CD4-positive, alpha-beta memory T cell (primary cell): ENCODE measurements at regions of chr20 and their contacts with region 1.

Region 1: DNA sequence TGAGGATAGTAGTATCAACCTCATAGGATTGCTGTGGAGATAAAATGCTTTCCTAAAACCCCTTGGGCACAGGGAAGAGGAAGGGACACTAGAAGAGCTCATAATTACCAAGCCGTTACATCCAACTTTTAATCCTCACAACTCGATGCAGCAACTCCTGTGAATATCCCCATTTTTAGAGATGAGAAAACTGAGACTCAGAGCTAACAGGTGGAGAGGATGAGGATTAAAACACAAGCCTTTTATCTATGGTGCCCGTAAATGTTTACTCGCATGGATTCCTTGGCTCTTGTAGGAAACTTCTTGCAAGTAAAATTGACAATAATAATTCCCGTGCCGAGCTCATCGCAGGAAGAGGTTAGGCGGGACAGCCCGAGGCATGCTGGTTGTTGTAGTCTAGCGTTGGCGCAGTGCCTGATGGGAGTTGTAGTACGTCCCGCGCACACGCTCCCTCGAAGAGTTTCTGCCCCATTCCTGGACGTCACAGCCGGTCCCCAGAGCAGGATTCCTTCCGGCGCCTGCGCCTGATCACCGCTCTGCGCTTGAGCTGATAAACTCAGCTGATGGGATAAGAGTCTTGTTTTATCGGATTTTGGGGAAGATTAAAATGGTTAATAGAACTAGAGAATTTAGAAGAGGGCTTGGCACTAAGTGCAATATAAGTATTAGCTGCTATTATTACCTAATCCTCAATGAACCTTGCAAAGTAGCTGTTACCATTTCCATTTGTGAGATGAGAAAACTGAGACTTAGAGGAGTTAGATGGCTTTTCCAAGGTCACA is 2.8 kb upstream of the UBE2V1 start:
- DNase-seq: peak; percentile 88 to 93 (median 89)
- H3K4me3 ChIP-seq: peak overlapping the region; percentile 39 to 52
- H3K4me3 Mint-ChIP-seq: peak overlapping the region; percentile 81 to 95 (median 90)
- H3K27ac ChIP-seq: peak overlapping the region; percentile 59
- H3K27ac Mint-ChIP-seq: peak overlapping the region; percentile 74 to 97 (median 97)
- H3K4me1 ChIP-seq: peaks cover 46% of the 10 kb centered on the region
- H3K4me1 Mint-ChIP-seq: peaks cover 42 to 58% (median 50%) of the 10 kb centered on the region in 4 donors
- H3K27me3 ChIP-seq: no peaks in the 10 kb centered on the region
- H3K27me3 Mint-ChIP-seq: no peaks in the 10 kb centered on the region

Region 2: DNA sequence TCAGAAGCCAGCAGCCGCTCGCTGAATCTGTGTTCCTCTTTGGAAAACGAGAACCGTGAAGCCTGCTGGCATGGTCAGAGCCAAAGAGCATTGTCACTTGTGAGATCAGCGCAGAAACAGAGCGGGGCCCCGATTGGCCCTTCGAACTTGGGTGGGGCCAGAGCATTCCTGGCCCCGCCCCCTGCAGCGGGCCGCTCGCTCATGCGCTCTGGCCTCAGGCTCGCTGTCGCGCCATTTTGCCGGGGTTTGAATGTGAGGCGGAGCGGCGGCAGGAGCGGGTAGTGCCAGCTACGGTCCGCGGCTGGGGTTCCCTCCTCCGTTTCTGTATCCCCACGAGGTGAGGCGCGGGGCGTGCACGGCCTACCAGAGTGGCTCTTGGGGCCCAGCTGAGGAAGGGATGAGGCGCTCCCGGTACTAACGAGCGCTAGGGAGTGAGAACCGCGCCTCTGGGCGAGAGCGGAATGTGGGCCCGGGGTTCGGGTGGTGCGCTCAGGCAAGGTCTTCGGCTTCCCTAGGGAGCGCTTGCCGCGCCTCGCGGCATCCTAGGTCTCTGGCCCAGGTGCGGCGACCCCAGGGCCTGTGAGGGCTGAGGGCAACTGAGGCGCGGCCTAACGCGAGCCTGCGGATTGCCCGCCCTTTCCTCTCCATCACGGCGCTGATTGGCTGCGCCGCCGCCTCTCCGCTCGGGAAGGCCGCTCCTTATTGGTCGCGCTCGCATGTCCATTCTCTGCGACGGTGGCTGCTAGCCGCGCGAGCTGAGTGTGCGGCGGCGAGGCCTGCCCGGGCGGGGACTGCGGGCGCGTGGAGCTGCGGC is 1069.5 kb before region 1 on chr20 and contains the start of gene CSE1L:
- CTCF ChIA-PET with region 1: no interaction called
- POLR2A ChIA-PET with region 1: no interaction called
- intact Hi-C with region 1: loop called (anchors 10 kb)
- DNase-seq: peak; percentile 93 to 97 (median 94)
- H3K4me3 ChIP-seq: peak within 1 kb of the TSS; percentile 99 to 100
- H3K4me3 Mint-ChIP-seq: peak within 1 kb of the TSS; percentile 97 to 99 (median 98)
- H3K27ac ChIP-seq: peak within 1 kb of the TSS; percentile 87
- H3K27ac Mint-ChIP-seq: peak within 1 kb of the TSS; percentile 98 to 99 (median 99)
- H3K4me1 ChIP-seq: peaks cover 40% of the 10 kb centered on the region
- H3K4me1 Mint-ChIP-seq: peaks cover 24 to 49% (median 38%) of the 10 kb centered on the region in 4 donors
- H3K27me3 ChIP-seq: no peaks in the 10 kb centered on the region
- H3K27me3 Mint-ChIP-seq: no peaks in the 10 kb centered on the region
- total RNA-seq, gene CSE1L: 44.5 to 45.8 TPM

Region 3: DNA sequence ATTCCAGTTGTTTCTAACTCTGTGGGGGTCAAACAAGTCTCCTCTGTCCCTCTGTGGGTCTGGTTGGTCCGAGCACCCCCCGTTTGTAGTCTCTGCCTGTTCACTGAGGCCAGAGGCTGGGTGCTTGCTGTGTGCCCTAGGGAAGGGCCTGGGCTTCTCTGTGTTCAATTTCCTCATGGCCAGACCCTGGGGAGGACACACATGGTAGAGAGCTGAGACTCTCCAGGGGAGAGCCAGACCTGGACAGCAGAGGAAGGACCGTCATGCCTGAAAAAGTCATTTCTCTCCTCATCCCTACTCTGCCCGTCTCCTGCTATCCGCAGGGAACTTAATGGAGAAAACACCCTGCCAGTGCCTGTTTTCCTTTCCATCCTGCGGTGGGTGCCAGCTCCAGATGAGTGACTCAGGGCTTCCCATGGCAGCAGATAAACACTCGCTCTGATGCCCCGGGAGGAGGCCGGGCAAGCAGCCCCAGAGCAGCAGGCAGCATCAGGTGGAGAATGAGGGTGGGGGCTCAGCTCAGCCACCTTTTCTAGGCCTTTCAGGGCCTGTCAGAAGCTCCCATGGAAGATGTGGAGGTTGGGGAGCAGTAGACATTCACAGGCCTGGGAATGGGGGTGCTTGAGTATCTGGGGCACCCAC is 81.1 kb before region 1 on chr20:
- CTCF ChIA-PET with region 1: no interaction called
- POLR2A ChIA-PET with region 1: no interaction called
- intact Hi-C with region 1: no loop called
- DNase-seq: no peak
- H3K4me3 ChIP-seq: no peak overlapping the region
- H3K4me3 Mint-ChIP-seq: no peak overlapping the region
- H3K27ac ChIP-seq: no peak overlapping the region
- H3K27ac Mint-ChIP-seq: no peak overlapping the region
- H3K4me1 ChIP-seq: no peaks in the 10 kb centered on the region
- H3K4me1 Mint-ChIP-seq: no peaks in the 10 kb centered on the region
- H3K27me3 ChIP-seq: no peaks in the 10 kb centered on the region
- H3K27me3 Mint-ChIP-seq: peaks cover 0 to 3% of the 10 kb centered on the region in 2 donors

Region 4: DNA sequence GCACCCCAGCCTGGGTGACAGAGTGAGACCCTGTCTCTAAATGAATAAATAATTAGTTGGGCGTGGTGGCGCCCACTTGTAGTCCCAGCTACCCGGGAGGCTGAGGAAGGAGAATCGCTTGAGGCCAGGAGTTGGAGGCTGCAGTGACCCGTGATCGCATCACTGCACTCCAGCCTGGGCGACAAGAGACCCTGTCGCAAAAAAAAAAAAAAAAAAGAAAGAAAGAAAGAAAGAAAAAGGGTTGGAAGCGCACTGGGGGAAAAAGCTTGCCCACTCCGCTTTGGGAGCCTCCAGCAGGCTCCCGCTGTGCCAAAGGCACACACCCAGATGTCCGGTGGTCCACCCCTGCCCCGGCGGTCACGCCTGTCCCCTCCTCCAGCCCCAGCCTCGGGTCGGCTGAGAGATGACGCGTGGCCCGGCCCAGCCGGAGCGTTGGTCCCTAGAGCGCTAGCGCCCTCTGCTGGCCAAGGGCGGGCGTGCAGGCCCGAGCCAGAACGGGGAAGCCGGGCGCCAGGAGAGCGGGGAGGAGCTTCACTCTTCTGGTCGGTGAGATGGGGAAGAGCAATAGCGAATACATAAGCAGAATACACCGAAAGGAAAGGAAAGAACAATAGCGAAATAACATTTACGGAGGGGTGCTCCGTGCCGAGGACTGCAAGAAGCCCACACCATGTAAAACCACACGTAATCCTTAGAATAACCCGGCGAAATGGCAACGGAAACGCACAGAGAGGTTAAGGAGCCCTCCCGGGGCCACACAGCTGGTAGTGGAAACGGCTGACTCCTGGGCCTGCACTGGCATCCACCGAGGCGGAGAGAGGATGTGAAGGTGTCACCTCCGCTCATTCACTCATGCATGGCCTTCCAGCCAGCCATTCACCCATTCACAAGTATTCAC is 44.5 kb before region 1 on chr20:
- CTCF ChIA-PET with region 1: interaction called, 17 read pairs
- POLR2A ChIA-PET with region 1: no interaction called
- intact Hi-C with region 1: no loop called
- DNase-seq: peak; percentile 79 to 90 (median 83)
- H3K4me3 ChIP-seq: peak overlapping the region; percentile 0 to 34
- H3K4me3 Mint-ChIP-seq: peak overlapping the region; percentile 71 to 79 (median 74)
- H3K27ac ChIP-seq: no peak overlapping the region
- H3K27ac Mint-ChIP-seq: peak overlapping the region in 3 of 7 donors; percentile 40 to 84 (median 81)
- H3K4me1 ChIP-seq: peaks cover 6% of the 10 kb centered on the region
- H3K4me1 Mint-ChIP-seq: peaks cover 3 to 6% (median 5%) of the 10 kb centered on the region in 4 donors
- H3K27me3 ChIP-seq: no peaks in the 10 kb centered on the region
- H3K27me3 Mint-ChIP-seq: peaks cover 0 to 2% of the 10 kb centered on the region in 2 donors

Region 5: DNA sequence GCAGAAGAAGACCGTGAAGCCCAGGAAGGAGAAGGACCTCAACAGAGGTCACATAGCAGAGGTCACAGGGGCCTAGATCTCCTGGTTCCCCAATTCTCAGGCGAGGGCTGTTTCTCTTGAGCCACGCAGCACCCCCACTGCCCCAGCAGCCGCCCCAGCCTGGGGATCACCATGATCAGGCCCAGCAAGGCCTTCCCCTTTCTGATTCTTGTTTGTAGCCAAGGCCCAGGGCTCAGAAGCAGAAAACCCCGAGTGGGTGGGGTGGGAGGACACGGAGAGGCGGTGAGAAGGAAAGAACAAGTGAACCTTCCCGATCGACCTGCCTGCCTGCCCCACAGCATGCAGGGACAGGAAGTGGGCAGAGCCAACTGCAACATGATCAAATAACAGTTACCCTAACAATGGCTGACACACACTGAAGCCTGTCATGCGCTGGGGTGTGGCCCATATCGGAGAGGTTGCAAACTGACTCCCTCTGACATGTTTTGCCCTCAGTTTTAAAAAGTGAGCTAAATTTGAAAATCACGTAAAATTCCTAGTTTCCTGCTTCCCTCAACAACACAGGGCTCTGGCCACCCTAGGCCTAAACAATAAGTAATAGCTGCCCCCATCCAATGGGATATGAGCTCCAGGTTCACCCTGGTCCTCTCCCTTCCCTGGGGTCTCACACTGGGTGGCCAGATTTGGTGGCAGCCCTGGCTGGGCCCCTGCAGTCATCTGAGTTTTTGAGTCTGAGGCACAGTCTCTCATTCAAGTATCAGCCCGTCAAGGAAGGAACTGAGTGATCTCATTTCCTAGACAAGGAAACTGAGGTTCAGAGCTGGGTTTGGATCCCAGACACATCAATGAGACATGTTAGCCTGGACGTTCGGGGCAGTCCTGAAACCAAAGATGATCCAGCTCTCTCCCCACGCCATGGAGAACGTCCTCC is 31.2 kb after region 1 on chr20:
- CTCF ChIA-PET with region 1: interaction called, 70 read pairs
- POLR2A ChIA-PET with region 1: interaction called, 76 read pairs
- intact Hi-C with region 1: loop called (anchors 1 kb)
- DNase-seq: peak; percentile 78 to 94 (median 84)
- H3K4me3 ChIP-seq: peak overlapping the region; percentile 4 to 49
- H3K4me3 Mint-ChIP-seq: peak overlapping the region; percentile 78 to 93 (median 84)
- H3K27ac ChIP-seq: peak overlapping the region; percentile 78
- H3K27ac Mint-ChIP-seq: peak overlapping the region; percentile 97 to 99 (median 98)
- H3K4me1 ChIP-seq: peaks cover 65% of the 10 kb centered on the region
- H3K4me1 Mint-ChIP-seq: peaks cover 48 to 70% (median 60%) of the 10 kb centered on the region in 4 donors
- H3K27me3 ChIP-seq: no peaks in the 10 kb centered on the region
- H3K27me3 Mint-ChIP-seq: no peaks in the 10 kb centered on the region

Region 6: DNA sequence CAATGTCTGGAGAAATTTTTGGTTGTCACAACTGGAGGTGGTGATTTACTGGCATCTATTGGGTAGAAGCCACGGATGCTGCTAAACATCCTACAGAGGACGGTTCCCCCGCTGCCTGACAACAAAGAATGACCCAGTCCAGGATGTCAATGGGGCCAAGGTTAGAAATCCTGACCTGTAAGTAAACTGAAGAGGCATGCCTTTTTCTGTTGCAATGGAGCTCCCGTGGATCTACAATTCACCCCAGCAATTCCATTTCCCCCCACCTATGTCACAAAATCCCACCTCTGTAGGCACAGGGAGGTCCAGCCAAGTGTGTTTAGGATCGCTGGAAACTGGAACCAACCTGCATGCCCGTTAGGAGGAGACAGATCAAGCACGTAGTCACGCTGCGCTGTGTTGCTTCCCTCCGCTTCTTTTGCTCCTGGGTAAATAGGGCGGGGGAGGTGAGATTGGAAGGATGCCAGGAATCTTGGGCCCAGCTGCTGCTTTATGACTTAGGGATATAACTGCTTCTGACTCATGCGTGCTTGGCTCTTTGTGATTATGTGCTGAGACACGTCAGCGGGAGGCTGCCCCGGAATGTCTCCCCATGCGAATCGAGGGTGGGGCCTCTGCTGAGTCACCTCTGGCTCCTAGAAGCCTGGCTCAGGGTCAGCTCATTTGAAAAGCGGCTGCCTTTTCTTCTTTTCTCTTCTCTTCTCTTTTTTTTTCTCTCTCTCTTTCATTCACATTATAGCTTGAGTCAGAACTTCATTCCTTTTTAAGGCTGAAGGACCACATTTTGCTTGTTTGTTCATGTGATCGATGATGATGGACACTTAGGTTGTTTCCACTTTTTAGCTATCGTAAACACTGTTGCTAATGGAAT is 50.1 kb after region 1 on chr20:
- CTCF ChIA-PET with region 1: interaction called, 338 read pairs
- POLR2A ChIA-PET with region 1: interaction called, 25 read pairs
- intact Hi-C with region 1: no loop called
- DNase-seq: peak; percentile 28 to 90 (median 34)
- H3K4me3 ChIP-seq: no peak overlapping the region
- H3K4me3 Mint-ChIP-seq: peak overlapping the region; percentile 35 to 72 (median 64)
- H3K27ac ChIP-seq: no peak overlapping the region
- H3K27ac Mint-ChIP-seq: peak overlapping the region in 5 of 7 donors; percentile 41 to 82 (median 70)
- H3K4me1 ChIP-seq: peaks cover 9% of the 10 kb centered on the region
- H3K4me1 Mint-ChIP-seq: peaks cover 6 to 13% (median 10%) of the 10 kb centered on the region in 4 donors
- H3K27me3 ChIP-seq: no peaks in the 10 kb centered on the region
- H3K27me3 Mint-ChIP-seq: peaks cover 2 to 4% of the 10 kb centered on the region in 2 donors

Region 7: GRCh38 chr20:50198180-50198666 is 82.4 kb after region 1 on chr20:
- CTCF ChIA-PET with region 1: no interaction called
- POLR2A ChIA-PET with region 1: no interaction called
- intact Hi-C with region 1: no loop called
- DNase-seq: no peak
- H3K4me3 ChIP-seq: no peak overlapping the region
- H3K4me3 Mint-ChIP-seq: no peak overlapping the region
- H3K27ac ChIP-seq: no peak overlapping the region
- H3K27ac Mint-ChIP-seq: no peak overlapping the region
- H3K4me1 ChIP-seq: peaks cover 21% of the 10 kb centered on the region
- H3K4me1 Mint-ChIP-seq: peaks cover 5 to 24% (median 17%) of the 10 kb centered on the region in 4 donors
- H3K27me3 ChIP-seq: no peaks in the 10 kb centered on the region
- H3K27me3 Mint-ChIP-seq: no peaks in the 10 kb centered on the region

Region 8: DNA sequence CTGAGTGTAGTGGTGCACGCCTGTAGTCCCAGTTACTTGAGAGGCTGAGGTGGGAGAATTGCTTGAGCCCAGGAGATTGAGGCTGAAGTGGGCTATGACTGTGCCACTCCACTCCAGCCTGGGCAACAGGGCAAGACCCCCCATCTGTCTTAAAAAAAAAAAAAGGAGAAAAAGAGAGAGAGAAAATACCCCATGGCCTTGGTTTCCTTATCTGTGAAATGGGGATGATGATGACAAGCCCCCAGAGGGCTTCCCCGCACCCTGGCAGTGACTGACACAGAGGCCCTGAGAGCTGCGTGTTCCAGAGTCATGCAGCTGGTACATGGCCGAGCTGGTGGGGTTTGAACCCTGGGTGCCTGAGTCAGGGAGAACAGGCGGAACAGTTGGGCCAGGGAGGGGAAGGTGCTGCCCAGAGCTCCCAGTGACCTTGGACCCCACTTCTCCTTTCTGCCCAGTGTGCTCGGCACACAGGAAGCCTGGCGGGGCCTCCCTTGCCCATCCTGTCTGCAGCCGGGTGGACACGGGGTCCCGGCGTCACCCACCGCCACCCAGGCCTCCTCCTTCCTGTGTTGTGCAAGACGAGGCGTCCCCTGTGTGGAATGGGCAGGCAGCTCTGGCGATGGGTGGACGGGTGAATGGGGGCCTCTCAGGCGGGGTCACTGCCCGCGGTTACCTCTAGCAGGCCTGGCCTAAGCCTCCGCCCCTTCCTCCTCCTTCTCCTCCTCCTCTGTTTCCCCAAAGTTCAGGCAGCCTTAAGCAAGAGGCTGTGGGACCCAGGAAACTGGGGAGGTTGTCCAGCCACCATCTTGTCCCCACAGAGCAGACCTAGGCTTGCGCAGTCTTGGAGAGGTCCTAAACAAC is 159.0 kb after region 1 on chr20:
- CTCF ChIA-PET with region 1: no interaction called
- POLR2A ChIA-PET with region 1: no interaction called
- intact Hi-C with region 1: no loop called
- DNase-seq: no peak
- H3K4me3 ChIP-seq: no peak overlapping the region
- H3K4me3 Mint-ChIP-seq: no peak overlapping the region
- H3K27ac ChIP-seq: no peak overlapping the region
- H3K27ac Mint-ChIP-seq: no peak overlapping the region
- H3K4me1 ChIP-seq: no peaks in the 10 kb centered on the region
- H3K4me1 Mint-ChIP-seq: no peaks in the 10 kb centered on the region
- H3K27me3 ChIP-seq: no peaks in the 10 kb centered on the region
- H3K27me3 Mint-ChIP-seq: peaks cover 12 to 15% of the 10 kb centered on the region in 2 donors

Region 9: DNA sequence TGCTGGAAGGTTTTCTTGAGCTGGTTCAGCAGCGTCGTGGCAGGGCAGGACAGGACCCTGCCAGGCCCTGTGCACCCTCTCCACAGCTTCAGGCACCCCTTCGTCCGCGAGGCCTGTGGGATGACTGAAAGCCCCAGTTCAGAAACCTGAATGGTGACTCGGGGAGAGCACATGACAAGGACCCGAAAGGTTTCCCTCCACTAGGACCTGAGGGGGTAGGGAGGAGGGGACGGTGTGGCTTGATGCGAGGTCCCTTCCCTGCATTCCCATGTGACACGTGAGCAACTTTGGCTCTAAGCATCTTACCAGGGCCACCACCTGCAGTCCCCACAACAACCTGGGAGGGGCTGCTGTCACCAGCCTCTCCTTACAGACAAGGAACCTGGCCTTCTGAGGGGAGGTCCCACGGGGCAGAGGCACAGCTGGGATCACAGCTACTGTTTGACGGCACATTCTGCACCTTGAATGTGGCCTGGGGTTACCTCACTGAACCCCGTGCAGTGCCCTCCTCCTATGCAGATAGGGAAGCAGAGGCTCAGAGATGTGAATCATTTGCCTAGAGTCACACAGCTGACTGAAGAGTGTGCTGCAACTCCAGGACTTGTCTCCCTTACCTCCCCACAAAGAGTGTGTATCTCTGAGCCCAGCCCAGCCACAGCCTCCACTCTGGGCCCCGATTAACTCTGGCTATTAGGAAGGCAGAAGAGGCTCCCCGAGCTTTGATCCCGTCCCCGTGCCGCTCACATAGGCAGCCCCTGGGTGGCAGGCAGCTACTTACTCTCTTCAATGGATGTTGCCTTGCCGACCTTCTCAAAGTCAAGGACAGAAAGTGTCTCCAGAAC is 479.0 kb after region 1 on chr20:
- CTCF ChIA-PET with region 1: no interaction called
- POLR2A ChIA-PET with region 1: no interaction called
- intact Hi-C with region 1: no loop called
- DNase-seq: peak in 1 of 5 donors; percentile 17
- H3K4me3 ChIP-seq: no peak overlapping the region
- H3K4me3 Mint-ChIP-seq: no peak overlapping the region
- H3K27ac ChIP-seq: no peak overlapping the region
- H3K27ac Mint-ChIP-seq: peak overlapping the region in 5 of 7 donors; percentile 30 to 75 (median 41)
- H3K4me1 ChIP-seq: no peaks in the 10 kb centered on the region
- H3K4me1 Mint-ChIP-seq: peaks cover 0 to 14% (median 3%) of the 10 kb centered on the region in 4 donors
- H3K27me3 ChIP-seq: no peaks in the 10 kb centered on the region
- H3K27me3 Mint-ChIP-seq: no peaks in the 10 kb centered on the region